ENCODE measurements at regions of chr7 and their contacts with region 1.

Region 1: DNA sequence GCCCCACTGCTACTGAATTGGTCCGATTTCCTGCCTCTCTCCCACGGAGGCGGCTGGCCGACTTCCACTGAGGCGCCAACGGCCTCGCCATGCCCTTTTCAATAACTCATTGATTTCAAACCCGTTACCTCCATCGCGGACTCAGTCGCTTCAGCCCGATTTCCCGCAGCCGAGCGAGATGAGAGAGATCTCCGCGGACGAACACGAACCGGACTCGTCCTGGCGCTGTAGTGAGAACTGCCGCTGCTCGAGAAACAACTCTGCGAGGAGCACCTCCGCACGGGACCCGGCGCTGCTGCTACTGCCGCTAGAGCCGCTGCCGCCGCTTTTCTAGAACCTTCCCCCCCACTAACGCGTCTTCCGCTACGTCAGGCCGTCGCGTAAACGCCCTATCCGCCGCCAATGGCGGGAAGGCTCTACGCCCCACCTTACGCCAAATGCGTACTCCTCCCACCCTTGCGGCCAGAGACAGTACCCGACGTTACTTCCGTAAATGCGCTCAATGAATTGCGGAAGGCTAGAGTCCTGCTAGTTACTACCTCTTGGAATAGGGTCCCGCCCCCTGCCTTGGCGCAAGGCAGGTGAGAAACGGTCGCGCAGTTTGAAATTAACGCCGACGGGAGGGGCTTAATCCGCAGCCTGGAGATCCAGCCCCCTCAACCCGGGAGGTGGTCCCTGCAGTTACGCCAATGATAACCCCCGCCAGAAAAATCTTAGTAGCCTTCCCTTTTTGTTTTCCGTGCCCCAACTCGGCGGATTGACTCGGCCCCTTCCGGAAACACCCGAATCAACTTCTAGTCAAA is at the start of gene HNRNPA2B1:
- DNase-seq: peak; percentile 97 to 98
- H3K4me3 ChIP-seq: peak within 1 kb of the TSS; percentile 98 to 99 (median 98)
- H3K27ac ChIP-seq: peak within 1 kb of the TSS; percentile 99
- H3K4me1 ChIP-seq: peaks cover 0 to 9% (median 3%) of the 10 kb centered on the region in 4 experiments; a peak in 3 of 7 replicates
- H3K27me3 ChIP-seq: no peaks in the 10 kb centered on the region
- CTCF ChIP-seq: no peak
- EP300 ChIP-seq: no peak
- POLR2A ChIP-seq: peak; percentile 98 to 99
- RAD21 ChIP-seq: no peak
- total RNA-seq, gene HNRNPA2B1: 1,232 and 1,255 TPM in 2 replicates

Region 2: DNA sequence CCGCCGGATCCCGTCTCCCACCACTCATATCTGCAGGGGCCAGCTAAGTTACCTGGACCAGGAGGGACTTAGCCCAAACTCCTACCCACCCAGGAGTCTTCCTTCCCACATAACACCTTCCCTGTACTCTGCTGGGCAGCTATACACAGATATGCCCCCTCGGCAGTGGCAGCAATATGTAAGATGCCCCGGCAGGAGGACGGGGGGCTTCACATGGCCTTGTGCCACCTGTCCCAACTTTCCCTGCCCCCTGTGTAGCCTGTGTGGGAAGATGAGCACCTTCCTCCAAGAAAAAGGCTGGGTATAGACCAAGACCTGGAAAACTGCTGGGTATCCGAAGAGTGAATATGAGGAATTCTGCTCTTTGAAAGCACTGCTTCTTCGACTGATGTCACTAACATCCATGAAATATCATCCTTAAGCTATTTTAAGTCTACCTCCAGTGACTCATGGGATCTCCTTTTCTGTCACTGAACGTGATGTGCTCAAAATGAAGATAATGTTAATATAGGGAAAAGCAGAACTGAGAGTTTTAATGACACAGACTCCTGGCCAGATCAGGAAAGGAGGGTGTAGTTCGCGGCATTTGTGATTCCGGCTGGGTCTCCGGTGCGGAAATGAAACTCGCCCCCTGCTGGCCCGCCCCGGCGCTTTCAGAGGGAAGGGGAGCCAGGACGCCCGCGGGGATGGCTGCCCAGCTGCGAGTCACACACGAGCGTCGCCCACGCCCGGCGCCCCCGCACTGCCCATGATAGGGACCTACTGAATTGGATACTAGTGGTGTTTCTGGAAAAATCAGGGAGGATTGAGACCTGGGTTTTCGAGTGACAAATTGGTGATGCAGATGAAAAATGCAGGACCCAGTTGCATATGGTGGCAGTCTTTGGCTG is 305.5 kb before region 1 on chr7:
- CTCF ChIA-PET with region 1: interaction called, 8 read pairs
- POLR2A ChIA-PET with region 1: interaction called, 10 read pairs
- DNase-seq: peak in 1 of 2 experiments; percentile 87
- H3K4me3 ChIP-seq: peak overlapping the region; percentile 54 to 76 (median 62)
- H3K27ac ChIP-seq: no peak overlapping the region
- H3K4me1 ChIP-seq: peaks cover 0 to 7% (median 2%) of the 10 kb centered on the region in 4 experiments; a peak in 3 of 7 replicates
- H3K27me3 ChIP-seq: no peaks in the 10 kb centered on the region
- CTCF ChIP-seq: peak; percentile 50 to 65 (median 53)
- EP300 ChIP-seq: no peak
- POLR2A ChIP-seq: no peak
- RAD21 ChIP-seq: peak; percentile 15 to 43; a peak in 2 of 4 replicates

Region 3: GRCh38 chr7:26090927-26091519 is 109.6 kb before region 1 on chr7:
- CTCF ChIA-PET with region 1: interaction called, 19 read pairs
- POLR2A ChIA-PET with region 1: interaction called, 230 read pairs
- DNase-seq: no peak
- H3K4me3 ChIP-seq: peak overlapping the region in 1 of 4 experiments; percentile 19; a peak in 1 of 8 replicates
- H3K27ac ChIP-seq: no peak overlapping the region
- H3K4me1 ChIP-seq: peaks cover 0 to 3% (median 3%) of the 10 kb centered on the region in 4 experiments; a peak in 3 of 7 replicates
- H3K27me3 ChIP-seq: no peaks in the 10 kb centered on the region
- CTCF ChIP-seq: peak in 2 of 3 experiments; percentile 63 to 76; a peak in 3 of 4 replicates
- EP300 ChIP-seq: no peak
- POLR2A ChIP-seq: no peak
- RAD21 ChIP-seq: peak; percentile 84 to 87

Region 4: DNA sequence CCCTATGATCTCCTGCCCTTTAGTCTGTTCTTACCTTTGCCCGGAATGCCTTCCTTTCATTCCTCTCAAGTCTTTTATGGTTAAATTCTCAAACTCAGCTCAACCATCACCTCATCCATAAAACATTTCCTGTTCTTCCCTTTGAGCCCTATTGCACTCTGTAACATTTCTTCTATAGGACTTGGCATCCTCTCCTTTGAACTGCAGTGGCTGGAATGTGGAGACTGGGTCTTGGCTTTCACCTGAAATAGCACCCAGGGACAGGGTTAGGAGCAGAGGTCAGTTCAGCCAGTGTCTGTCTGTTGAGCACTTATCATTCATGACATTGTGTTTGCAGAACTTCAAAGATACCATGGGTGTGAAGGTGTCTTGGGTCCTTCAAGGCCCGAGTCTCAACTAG is 41.4 kb before region 1 on chr7:
- CTCF ChIA-PET with region 1: interaction called, 4 read pairs
- POLR2A ChIA-PET with region 1: interaction called, 40 read pairs
- DNase-seq: no peak
- H3K4me3 ChIP-seq: no peak overlapping the region
- H3K27ac ChIP-seq: no peak overlapping the region
- H3K4me1 ChIP-seq: peaks cover 19 to 37% (median 29%) of the 10 kb centered on the region in 4 experiments
- H3K27me3 ChIP-seq: peaks cover 0 to 7% (median 0%) of the 10 kb centered on the region in 4 experiments; a peak in 2 of 7 replicates
- CTCF ChIP-seq: no peak
- EP300 ChIP-seq: no peak
- POLR2A ChIP-seq: no peak
- RAD21 ChIP-seq: no peak

Region 5: GRCh38 chr7:26224359-26224758 is 23.7 kb after region 1 on chr7:
- CTCF ChIA-PET with region 1: no interaction called
- POLR2A ChIA-PET with region 1: interaction called, 442 read pairs
- DNase-seq: no peak
- H3K4me3 ChIP-seq: no peak overlapping the region
- H3K27ac ChIP-seq: no peak overlapping the region
- H3K4me1 ChIP-seq: no peaks in the 10 kb centered on the region
- H3K27me3 ChIP-seq: no peaks in the 10 kb centered on the region
- CTCF ChIP-seq: no peak
- EP300 ChIP-seq: no peak
- POLR2A ChIP-seq: no peak
- RAD21 ChIP-seq: no peak

Region 6: GRCh38 chr7:26291699-26292538 is 91.3 kb after region 1 on chr7 and contains the start of gene SNX10:
- CTCF ChIA-PET with region 1: no interaction called
- POLR2A ChIA-PET with region 1: interaction called, 10 read pairs
- DNase-seq: peak; percentile 41 to 75
- H3K4me3 ChIP-seq: peak within 1 kb of the TSS; percentile 24 to 82 (median 60)
- H3K27ac ChIP-seq: no peak within 1 kb of the TSS
- H3K4me1 ChIP-seq: peaks cover 0 to 5% (median 2%) of the 10 kb centered on the region in 4 experiments; a peak in 5 of 7 replicates
- H3K27me3 ChIP-seq: 0 out of 7 replicates have a peak, but pooled peaks cover 0 to 3% (median 0%) of the 10 kb centered on the region in 4 experiments
- CTCF ChIP-seq: peak; percentile 52 to 64 (median 64)
- EP300 ChIP-seq: no peak
- POLR2A ChIP-seq: no peak
- RAD21 ChIP-seq: peak; percentile 42 to 67; a peak in 3 of 4 replicates
- total RNA-seq, gene SNX10: 9.6 and 9.9 TPM in 2 replicates

Region 7: GRCh38 chr7:26794541-26794940 is 593.9 kb after region 1 on chr7:
- CTCF ChIA-PET with region 1: no interaction called
- POLR2A ChIA-PET with region 1: no interaction called
- DNase-seq: no peak
- H3K4me3 ChIP-seq: no peak overlapping the region
- H3K27ac ChIP-seq: no peak overlapping the region
- H3K4me1 ChIP-seq: no peaks in the 10 kb centered on the region
- H3K27me3 ChIP-seq: no peaks in the 10 kb centered on the region
- CTCF ChIP-seq: no peak
- EP300 ChIP-seq: no peak
- POLR2A ChIP-seq: no peak
- RAD21 ChIP-seq: no peak